Activated CD4-positive, alpha-beta memory T cell treated with anti-CD3 and anti-CD28 coated beads, Interleukin-2, amount 10 ng/mL, durations not matched to agents 7 days and 5 days (primary cell): ENCODE measurements at regions of chr12 and their contacts with region 1.

Region 1: DNA sequence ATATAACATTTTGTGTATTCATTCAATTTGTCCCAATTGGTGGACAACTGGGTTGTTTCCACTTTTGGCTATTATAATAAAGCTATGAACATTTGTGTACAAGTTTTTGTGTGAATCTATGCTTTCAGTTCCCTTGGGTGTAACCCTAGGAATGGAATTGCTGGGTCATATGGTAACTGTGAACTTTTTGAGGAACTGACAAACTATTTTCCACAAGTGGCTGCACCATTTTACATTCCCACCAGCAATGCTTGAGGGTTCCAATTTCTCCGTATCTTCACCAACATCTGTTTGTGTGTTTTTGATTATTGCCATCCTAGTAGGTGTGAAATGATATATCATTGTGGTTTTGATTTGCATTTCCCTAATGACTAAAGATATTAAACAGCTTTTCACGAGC is 13.0 kb downstream of the LPCAT3 start:
- DNase-seq: no peak
- H3K4me3 Mint-ChIP-seq: no peak overlapping the region
- H3K27ac Mint-ChIP-seq: no peak overlapping the region
- H3K4me1 Mint-ChIP-seq: peaks cover 14% of the 10 kb centered on the region
- H3K27me3 Mint-ChIP-seq: no peaks in the 10 kb centered on the region

Region 2: GRCh38 chr12:6978609-6979011 is 26.7 kb before region 1 on chr12:
- CTCF ChIA-PET with region 1: no interaction called
- POLR2A ChIA-PET with region 1: no interaction called
- DNase-seq: no peak
- H3K4me3 Mint-ChIP-seq: no peak overlapping the region
- H3K27ac Mint-ChIP-seq: no peak overlapping the region
- H3K4me1 Mint-ChIP-seq: peaks cover 18% of the 10 kb centered on the region
- H3K27me3 Mint-ChIP-seq: no peaks in the 10 kb centered on the region

Region 3: DNA sequence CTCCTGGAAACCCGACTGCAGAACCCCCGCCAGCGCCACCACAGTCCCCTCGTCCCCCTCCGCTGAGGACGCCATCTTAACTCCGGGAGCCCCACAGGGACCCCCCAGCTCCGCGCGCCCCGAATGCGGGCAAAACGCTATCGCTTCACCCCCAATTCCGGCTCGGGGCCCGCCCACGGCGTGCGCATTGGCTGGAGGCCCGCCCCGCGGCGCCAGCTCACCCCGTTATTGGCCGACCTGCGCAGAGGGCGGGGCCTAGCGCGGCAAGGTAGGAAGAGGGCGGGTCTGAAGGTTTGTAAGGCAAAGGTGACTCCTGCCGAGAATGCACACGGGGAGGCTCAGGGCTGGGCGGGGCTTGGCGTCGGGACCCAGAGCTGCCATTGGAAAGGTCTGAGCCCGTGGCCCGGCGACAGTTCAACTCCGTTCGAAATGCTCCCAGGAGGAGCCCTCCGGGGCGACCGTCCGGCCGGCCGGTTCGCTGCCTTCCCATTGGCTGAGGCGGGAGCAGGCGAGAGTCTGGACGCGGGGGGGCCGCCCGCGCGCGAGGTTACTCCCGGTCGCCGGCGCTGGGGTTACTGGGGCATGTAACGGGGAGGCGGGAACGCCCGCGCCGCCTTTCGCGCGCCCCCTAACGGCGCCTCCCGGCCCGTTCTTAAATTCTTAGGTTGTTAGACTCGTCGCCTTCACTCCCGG is 13.2 kb after region 1 on chr12 and contains the start of gene LPCAT3:
- CTCF ChIA-PET with region 1: interaction called, 11 read pairs
- POLR2A ChIA-PET with region 1: interaction called, 11 read pairs
- DNase-seq: peak; percentile 97
- H3K4me3 Mint-ChIP-seq: peak within 1 kb of the TSS; percentile 84
- H3K27ac Mint-ChIP-seq: peak within 1 kb of the TSS; percentile 81
- H3K4me1 Mint-ChIP-seq: peaks cover 30% of the 10 kb centered on the region
- H3K27me3 Mint-ChIP-seq: no peaks in the 10 kb centered on the region
- total RNA-seq, gene LPCAT3: 34.6 to 37.0 TPM

Region 4: GRCh38 chr12:7092229-7092985 is 87.1 kb after region 1 on chr12 and contains the start of gene C1R:
- CTCF ChIA-PET with region 1: no interaction called
- POLR2A ChIA-PET with region 1: no interaction called
- DNase-seq: peak; percentile 75
- H3K4me3 Mint-ChIP-seq: peak within 1 kb of the TSS; percentile 71
- H3K27ac Mint-ChIP-seq: no peak within 1 kb of the TSS
- H3K4me1 Mint-ChIP-seq: peaks cover 8% of the 10 kb centered on the region
- H3K27me3 Mint-ChIP-seq: peaks cover 6% of the 10 kb centered on the region
- total RNA-seq, gene C1R: 2.7 to 3.8 TPM